Left cardiac atrium (tissue), 4 donors: ENCODE measurements at regions of chr3 and their contacts with region 1.

Region 1: DNA sequence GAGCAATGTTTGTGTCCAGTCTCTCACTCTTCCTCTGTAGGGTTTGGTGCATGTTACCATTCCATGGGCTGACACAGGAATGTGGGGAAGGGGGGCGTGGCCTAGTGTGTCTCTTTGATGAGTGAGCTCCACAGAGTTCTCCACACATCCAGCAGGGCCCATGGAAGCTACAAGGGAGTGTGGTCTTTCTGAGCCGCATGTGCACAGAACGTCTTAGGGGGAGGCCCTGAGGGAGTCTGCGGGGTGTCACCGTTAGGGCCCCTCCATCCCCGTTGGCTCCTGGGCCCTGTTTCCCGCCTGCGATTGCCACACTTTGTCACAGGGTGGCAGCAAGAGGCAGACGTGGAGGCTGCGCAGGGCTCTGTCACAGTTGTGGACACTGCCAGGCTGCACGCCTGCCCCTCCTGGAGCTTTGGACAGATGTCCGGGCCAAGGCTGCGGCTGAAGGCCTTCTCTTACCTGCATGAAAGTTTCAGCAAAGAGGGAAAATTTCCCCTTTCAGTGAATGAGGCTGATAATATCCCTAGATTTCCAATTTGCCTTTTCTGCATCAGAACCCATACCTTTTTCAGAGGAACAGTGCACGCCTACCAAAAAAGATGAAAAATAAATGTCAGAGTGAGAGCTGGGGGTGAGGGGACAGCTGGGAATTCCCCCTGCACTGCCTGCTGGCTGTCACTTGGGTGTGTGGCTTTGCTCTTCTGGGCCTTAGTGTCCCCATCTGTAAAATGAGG is 24.3 kb downstream of the CACNA2D3 start:
- DNase-seq: peak; percentile 70
- ATAC-seq: peak; percentile 89 to 94

Region 2: DNA sequence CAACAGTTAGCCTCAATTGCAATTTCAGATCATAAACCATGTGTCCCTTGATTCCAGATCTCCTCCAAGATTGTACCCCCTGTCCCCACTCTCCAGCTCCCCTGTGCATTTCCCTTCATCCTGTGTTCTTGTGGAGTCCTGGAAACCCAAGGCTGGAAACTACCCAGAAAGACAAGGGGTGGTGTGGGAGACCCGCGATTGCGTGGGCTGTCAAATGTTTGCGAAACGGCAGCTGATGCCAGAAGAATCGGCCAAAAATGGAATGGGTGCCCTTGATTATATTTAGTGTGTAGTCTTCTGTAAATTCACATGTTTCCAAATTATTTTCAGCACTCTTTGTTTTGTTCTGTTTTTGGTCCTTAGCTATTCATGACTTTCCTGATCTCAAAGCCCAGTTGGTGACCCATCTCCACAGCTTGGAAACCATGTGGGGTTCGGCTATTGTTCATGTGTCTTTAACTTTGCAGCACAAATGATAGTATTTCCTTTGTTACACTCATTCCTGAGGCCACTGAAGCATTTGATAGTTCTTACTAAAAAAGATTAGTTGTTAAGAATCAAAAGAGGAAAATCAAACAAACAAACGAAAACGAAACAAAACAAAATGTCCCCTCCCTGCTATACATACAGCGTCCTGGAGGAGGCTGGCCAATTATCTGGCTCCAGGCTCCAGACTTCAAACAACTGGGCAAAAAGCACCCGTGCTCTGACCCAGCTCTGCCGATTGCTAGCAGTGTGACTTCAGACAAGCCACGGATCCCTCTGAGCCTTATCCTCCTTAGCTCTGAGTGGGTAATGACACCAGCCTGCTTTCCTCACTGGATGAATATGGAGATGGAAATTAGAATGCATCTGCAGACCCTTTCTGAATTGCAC is 96.6 kb after region 1 on chr3:
- intact Hi-C with region 1: no loop called
- DNase-seq: no peak
- ATAC-seq: peak; percentile 38 to 42

Region 3: DNA sequence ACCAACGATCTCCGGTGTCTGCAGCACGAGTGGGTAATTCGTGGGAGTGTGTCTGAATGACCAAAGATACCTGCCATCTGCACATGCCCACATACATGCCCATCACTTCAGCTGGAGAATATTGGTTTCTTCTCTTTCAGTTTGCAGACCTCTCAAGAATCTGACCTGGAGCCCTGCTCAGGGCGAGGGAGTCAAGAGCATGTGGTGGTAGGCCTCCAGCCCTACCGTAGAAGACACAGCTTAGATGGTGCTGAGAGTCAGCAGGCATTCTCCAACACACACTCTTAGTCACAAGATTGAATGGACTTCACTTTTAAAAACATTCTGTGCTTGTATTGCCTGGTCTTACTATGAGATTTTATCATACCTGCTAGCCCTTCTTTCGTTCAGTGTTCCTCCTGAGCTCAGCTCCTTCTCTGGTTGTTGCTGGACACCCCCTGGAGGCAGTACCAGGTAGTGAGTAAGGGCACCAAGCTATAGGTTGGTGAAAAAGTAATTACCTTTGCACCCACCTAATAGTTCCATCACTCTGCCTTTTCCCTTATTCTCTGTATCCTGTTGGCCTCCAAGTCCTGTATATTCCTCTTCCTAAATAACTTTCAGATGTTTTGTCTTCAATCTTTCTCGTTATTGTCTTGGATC is 227.7 kb after region 1 on chr3:
- intact Hi-C with region 1: loop called (anchors 5 to 10 kb)
- DNase-seq: no peak
- ATAC-seq: peak in 1 of 2 donors; percentile 39

Region 4: GRCh38 chr3:54783611-54784010 is 636.9 kb after region 1 on chr3:
- intact Hi-C with region 1: no loop called
- DNase-seq: no peak
- ATAC-seq: no peak